Left lung (tissue), 14 donors: ENCODE measurements at regions of chr11 and their contacts with region 1.

Region 1: DNA sequence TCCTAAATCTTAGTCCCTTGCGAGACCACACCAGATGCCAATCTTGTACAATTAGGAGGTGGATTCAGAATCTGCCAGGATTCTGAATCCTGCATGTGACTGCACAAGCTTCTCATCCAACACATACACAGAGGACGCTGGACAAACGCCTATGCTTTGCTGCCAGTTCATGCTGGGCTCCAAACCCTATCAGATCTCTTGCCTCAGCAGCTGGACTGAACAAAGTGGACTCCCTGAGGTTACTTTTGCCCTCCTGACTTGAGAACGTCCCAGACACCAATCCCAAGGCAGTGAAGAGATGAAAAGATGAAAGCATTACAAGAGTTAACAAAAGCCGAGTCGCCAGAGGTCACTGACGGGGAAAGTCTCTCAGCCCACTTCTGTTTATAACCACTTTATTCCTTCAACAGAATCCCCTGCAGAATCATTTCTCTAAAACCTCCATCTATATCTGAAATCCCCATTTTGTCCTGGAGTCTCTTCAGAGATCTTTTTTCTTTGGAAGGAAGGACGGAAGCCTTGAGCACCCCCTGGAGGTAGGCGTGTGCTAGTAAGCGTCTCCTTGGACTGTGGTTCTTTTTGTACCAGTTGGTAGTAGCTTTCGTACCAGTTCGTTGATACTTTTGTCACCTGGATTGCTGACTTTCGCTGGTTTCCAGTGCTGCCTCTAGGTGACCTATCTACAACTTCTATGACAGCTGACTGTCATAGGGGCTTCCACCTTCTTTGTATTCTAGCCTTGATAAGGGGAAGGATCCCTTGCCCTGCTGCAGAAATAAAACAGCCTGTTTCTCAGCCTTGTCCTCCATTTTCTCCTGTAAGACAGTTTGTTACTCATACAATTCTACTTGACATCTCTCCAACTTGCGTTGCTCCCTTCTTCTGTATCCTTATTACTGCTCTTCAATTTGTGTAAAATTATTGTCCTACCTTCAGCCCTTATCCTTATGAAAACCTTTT is 26.1 kb upstream of the EED start:
- DNase-seq: peak in 3 of 4 donors; percentile 63 to 80 (median 65)
- ATAC-seq: peak; percentile 99
- H3K4me3 ChIP-seq: no peak overlapping the region
- H3K27ac ChIP-seq: no peak overlapping the region
- H3K4me1 ChIP-seq: peaks cover 0 to 20% of the 10 kb centered on the region in 2 donors
- H3K27me3 ChIP-seq: no peaks in the 10 kb centered on the region
- CTCF ChIP-seq: peak; percentile 85 to 88

Region 2: GRCh38 chr11:85867751-85868150 is 350.7 kb before region 1 on chr11:
- intact Hi-C with region 1: loop called in 1 of 2 experiments (anchors 10 kb)
- DNase-seq: no peak
- ATAC-seq: no peak
- H3K4me3 ChIP-seq: no peak overlapping the region
- H3K27ac ChIP-seq: no peak overlapping the region
- H3K4me1 ChIP-seq: no peaks in the 10 kb centered on the region
- H3K27me3 ChIP-seq: no peaks in the 10 kb centered on the region
- CTCF ChIP-seq: no peak

Region 3: DNA sequence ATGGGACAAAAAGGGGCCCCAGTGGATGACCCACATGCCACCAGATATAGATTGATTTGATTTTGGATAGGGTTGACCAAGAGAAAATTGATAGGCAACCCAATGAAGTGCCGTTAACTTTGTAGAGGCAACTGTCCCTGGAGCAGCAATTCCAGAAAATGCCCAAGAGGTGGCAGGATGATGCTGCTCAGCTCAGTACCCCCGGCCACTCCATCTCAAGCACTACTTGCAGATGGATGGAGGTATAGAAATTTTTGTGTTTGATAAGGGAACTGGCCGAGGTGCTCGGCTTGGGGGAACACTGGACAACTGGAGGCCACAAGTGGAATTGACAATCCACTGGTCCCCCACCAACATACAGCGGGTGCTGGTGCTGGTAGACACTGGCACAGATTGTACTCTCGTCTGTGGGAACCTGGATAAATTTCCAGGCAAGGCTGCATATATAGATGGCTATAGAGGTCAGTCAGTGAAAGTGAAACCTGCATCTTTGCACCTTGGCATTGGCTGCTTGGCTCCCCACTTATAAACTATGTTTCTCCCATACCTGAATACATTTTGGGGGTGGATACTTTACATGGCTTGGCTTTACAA is 276.9 kb before region 1 on chr11:
- intact Hi-C with region 1: loop called in 1 of 2 experiments (anchors 5 kb)
- DNase-seq: peak in 2 of 4 donors; percentile 29 to 67
- ATAC-seq: peak; percentile 91
- H3K4me3 ChIP-seq: no peak overlapping the region
- H3K27ac ChIP-seq: no peak overlapping the region
- H3K4me1 ChIP-seq: peaks cover 0 to 15% of the 10 kb centered on the region in 2 donors
- H3K27me3 ChIP-seq: no peaks in the 10 kb centered on the region
- CTCF ChIP-seq: peak; percentile 62 to 66